H1 (cell line): ENCODE measurements at regions of chr1 and their contacts with region 1.

Region 1: GRCh38 chr1:206489980-206490770 is 17.2 kb upstream of the RASSF5 start:
- DNase-seq: peak; percentile 56 to 97
- H3K4me3 ChIP-seq: no peak overlapping the region
- H3K27ac ChIP-seq: no peak overlapping the region
- H3K4me1 ChIP-seq: no peaks in the 10 kb centered on the region
- H3K27me3 ChIP-seq: no peaks in the 10 kb centered on the region
- CTCF ChIP-seq: peak; percentile 96 to 99 (median 98)
- EP300 ChIP-seq: no peak
- POLR2A ChIP-seq: no peak
- RAD21 ChIP-seq: peak; percentile 95 to 97

Region 2: DNA sequence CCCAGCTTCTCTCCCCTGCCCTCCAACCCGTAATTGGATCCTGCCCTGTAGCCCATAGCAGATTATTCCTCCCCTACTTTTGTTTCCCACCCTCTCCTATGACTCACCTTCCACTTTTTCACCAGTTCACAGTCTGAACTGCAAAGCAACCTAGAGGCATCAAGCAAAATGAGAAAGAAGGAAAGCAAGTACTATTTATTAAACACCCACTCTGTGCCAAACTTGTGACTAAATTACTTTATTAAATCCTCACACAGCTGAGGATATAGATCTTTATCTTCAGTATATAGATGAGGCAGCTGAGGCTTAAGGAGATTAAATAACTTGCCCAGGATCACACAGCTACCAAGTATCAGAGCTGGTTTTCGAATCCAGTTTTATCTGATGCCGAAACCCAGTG is 40.6 kb before region 1 on chr1:
- CTCF ChIA-PET with region 1: no interaction called
- POLR2A ChIA-PET with region 1: no interaction called
- DNase-seq: no peak
- H3K4me3 ChIP-seq: no peak overlapping the region
- H3K27ac ChIP-seq: no peak overlapping the region
- H3K4me1 ChIP-seq: peaks cover 0 to 8% (median under 1%) of the 10 kb centered on the region in 4 experiments; a peak in 4 of 7 replicates
- H3K27me3 ChIP-seq: no peaks in the 10 kb centered on the region
- CTCF ChIP-seq: no peak
- EP300 ChIP-seq: no peak
- POLR2A ChIP-seq: no peak
- RAD21 ChIP-seq: no peak

Region 3: DNA sequence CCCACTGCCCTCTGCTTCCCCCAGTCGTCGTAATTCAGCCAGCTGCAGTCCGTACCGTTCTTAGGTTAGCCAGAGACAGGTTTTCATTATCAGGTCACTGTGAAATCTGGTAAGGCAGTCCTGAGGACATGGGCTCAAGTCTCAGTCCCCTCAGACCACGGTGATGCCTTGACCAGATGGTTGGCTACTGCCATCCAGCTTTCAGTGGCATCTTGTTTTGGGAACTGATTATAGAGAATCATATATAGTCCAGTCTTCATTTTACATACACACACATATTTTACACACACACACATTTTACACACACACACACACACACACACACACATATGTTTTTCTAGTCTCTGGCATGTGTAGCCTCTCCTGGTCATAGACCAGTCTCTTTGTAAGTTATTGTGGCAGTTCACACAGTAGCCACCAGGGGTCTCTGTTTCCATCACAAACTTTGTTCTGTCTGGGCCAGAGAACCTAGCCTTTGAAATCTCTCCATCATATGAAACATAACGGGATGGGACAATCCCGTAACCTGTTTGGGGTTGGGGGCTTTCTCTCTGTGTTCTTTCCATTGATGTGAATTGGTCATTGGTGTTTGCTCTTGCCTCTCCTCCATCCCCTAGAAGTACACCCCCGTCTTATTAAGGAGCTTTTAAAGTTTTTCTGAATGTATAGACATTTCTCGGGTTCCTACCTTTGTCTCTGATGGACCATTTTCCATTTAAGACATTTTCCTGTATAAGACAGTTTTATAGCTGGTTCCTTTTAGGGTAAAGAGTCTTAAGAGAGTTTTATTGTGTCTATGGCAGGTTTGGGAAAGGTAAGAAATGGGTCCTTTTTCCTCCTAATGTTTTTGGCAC is 28.3 kb before region 1 on chr1:
- CTCF ChIA-PET with region 1: interaction called, 18 read pairs
- POLR2A ChIA-PET with region 1: no interaction called
- DNase-seq: peak in 1 of 2 experiments; percentile 82
- H3K4me3 ChIP-seq: no peak overlapping the region
- H3K27ac ChIP-seq: no peak overlapping the region
- H3K4me1 ChIP-seq: no peaks in the 10 kb centered on the region
- H3K27me3 ChIP-seq: no peaks in the 10 kb centered on the region; a peak in 1 of 7 replicates
- CTCF ChIP-seq: peak in 2 of 3 experiments; percentile 62 to 76; a peak in 2 of 4 replicates
- EP300 ChIP-seq: no peak
- POLR2A ChIP-seq: no peak
- RAD21 ChIP-seq: peak; percentile 63 to 73

Region 4: DNA sequence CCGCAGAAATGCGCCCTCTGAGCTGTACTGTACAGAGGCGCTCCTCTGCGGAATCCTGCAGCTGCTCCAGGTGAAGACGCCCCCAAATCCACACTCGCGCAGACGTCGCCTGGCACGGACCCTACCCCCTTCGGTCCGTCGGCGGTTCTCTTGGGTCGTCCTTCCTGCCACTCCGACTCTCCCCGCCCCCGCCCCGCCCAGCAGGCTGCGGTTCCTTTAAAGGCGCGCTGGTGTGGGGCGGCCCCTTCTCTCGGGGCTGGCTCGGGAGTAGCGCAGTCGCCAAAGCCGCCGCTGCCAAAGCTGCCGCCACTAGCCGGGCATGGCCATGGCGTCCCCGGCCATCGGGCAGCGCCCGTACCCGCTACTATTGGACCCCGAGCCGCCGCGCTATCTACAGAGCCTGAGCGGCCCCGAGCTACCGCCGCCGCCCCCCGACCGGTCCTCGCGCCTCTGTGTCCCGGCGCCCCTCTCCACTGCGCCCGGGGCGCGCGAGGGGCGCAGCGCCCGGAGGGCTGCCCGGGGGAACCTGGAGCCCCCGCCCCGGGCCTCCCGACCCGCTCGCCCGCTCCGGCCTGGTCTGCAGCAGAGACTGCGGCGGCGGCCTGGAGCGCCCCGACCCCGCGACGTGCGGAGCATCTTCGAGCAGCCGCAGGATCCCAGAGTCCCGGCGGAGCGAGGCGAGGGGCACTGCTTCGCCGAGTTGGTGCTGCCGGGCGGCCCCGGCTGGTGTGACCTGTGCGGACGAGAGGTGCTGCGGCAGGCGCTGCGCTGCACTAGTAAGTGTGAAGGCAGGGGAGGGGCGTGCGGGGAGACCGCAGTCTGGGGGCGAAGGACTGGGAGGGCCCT is 17.3 kb after region 1 on chr1 and contains the start of gene RASSF5:
- CTCF ChIA-PET with region 1: interaction called, 123 read pairs
- POLR2A ChIA-PET with region 1: interaction called, 23 read pairs
- DNase-seq: peak; percentile 27 to 94
- H3K4me3 ChIP-seq: peak within 1 kb of the TSS; percentile 37 to 71 (median 64)
- H3K27ac ChIP-seq: no peak within 1 kb of the TSS
- H3K4me1 ChIP-seq: peaks cover 2 to 14% (median 6%) of the 10 kb centered on the region in 4 experiments; a peak in 6 of 7 replicates
- H3K27me3 ChIP-seq: peaks cover 17 to 49% (median 47%) of the 10 kb centered on the region in 4 experiments
- CTCF ChIP-seq: no peak
- EP300 ChIP-seq: no peak
- POLR2A ChIP-seq: peak; percentile 87 to 88
- RAD21 ChIP-seq: no peak
- total RNA-seq, gene RASSF5: 1.8 and 2.3 TPM in 2 replicates

Region 5: GRCh38 chr1:206537141-206537540 is 47.0 kb after region 1 on chr1:
- CTCF ChIA-PET with region 1: interaction called, 22 read pairs
- POLR2A ChIA-PET with region 1: no interaction called
- DNase-seq: no peak
- H3K4me3 ChIP-seq: no peak overlapping the region
- H3K27ac ChIP-seq: no peak overlapping the region
- H3K4me1 ChIP-seq: no peaks in the 10 kb centered on the region; a peak in 2 of 7 replicates
- H3K27me3 ChIP-seq: no peaks in the 10 kb centered on the region
- CTCF ChIP-seq: no peak
- EP300 ChIP-seq: no peak
- POLR2A ChIP-seq: no peak
- RAD21 ChIP-seq: no peak

Region 6: DNA sequence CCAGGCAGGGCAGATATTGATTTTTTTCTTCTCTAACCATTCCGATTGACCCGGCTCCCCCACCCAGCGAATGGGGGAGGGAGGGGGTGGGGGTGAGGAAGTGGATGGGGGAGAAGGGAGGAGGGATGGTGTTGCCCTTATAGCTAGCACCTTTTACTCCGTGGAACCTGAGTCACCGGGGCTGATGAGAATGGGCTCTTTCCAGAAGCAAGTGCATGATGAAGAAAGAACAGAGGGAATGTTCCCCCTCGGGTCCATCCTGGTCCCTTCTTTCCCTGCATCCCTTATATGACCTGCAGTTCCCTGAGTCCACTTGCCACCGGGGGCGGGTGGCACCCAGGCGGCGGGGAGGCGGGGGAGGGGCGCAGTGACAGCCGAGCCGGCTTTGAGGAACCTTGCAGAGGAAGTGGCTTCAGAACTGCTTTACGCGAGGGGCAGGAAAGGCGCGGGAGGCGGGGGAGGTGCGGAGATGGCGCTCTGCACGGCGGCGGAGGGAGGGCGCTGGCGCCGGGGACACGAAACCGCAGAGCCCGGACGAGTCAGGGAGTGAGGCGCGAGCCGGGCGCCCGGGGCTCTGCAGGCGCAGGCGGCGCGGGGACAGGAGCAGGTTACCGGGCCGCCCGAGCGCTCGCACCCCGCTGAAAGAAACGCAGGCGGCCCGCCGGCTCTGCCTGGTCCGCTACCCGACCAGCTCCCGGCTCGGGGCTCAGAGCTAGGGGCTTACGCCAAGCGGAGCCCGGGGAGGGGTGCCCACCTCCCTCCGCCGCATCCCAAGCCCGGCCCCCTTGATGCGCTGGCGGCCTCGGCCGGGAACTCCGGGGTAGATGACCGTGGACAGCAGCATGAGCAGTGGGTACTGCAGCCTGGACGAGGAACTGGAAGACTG is 66.8 kb after region 1 on chr1:
- CTCF ChIA-PET with region 1: interaction called, 20 read pairs
- POLR2A ChIA-PET with region 1: no interaction called
- DNase-seq: peak in 1 of 2 experiments; percentile 77
- H3K4me3 ChIP-seq: peak overlapping the region; percentile 43 to 65 (median 48)
- H3K27ac ChIP-seq: no peak overlapping the region
- H3K4me1 ChIP-seq: peaks cover 4 to 7% (median 5%) of the 10 kb centered on the region in 4 experiments; a peak in 6 of 7 replicates
- H3K27me3 ChIP-seq: peaks cover 5 to 29% (median 19%) of the 10 kb centered on the region in 4 experiments
- CTCF ChIP-seq: no peak
- EP300 ChIP-seq: no peak
- POLR2A ChIP-seq: no peak
- RAD21 ChIP-seq: no peak

Region 7: GRCh38 chr1:206583707-206584648 is 93.8 kb after region 1 on chr1:
- CTCF ChIA-PET with region 1: interaction called, 239 read pairs
- POLR2A ChIA-PET with region 1: interaction called, 3 read pairs
- DNase-seq: peak; percentile 36 to 91
- H3K4me3 ChIP-seq: no peak overlapping the region
- H3K27ac ChIP-seq: no peak overlapping the region
- H3K4me1 ChIP-seq: no peaks in the 10 kb centered on the region
- H3K27me3 ChIP-seq: no peaks in the 10 kb centered on the region
- CTCF ChIP-seq: peak; percentile 86 to 88 (median 87)
- EP300 ChIP-seq: no peak
- POLR2A ChIP-seq: no peak
- RAD21 ChIP-seq: peak; percentile 89 to 91